ENCODE measurements at regions of chr5 and their contacts with region 1.

Region 1: GRCh38 chr5:108451269-108451668 is 69.4 kb upstream of the FBXL17 start:
- DNase-seq: no peak
- ATAC-seq: no peak
- H3K4me3 ChIP-seq: no peak overlapping the region
- H3K27ac ChIP-seq: no peak overlapping the region
- H3K4me1 ChIP-seq: no peaks in the 10 kb centered on the region
- H3K27me3 ChIP-seq: no peaks in the 10 kb centered on the region
- CTCF ChIP-seq: peak in 1 of 3 experiments; percentile 23; a peak in 2 of 6 replicates
- EP300 ChIP-seq: no peak
- POLR2A ChIP-seq: no peak
- RAD21 ChIP-seq: peak; percentile 58

Region 2: GRCh38 chr5:109479260-109479860 is 1028.1 kb after region 1 on chr5:
- CTCF ChIA-PET with region 1: no interaction called
- POLR2A ChIA-PET with region 1: no interaction called
- RAD21 ChIA-PET with region 1: no interaction called
- SMC1A ChIA-PET with region 1: no interaction called
- in situ Hi-C with region 1: no loop called
- intact Hi-C with region 1: loop called (anchors 10 kb)
- DNase-seq: no peak
- ATAC-seq: peak; percentile 60; the same call in 2 of the 3 replicates
- H3K4me3 ChIP-seq: no peak overlapping the region
- H3K27ac ChIP-seq: no peak overlapping the region
- H3K4me1 ChIP-seq: no peaks in the 10 kb centered on the region
- H3K27me3 ChIP-seq: 0 out of 4 replicates have a peak, but pooled peaks cover 0 to 4% of the 10 kb centered on the region in 2 experiments
- CTCF ChIP-seq: peak; percentile 29 to 54 (median 34); a peak in 3 of 6 replicates
- EP300 ChIP-seq: no peak
- POLR2A ChIP-seq: no peak
- RAD21 ChIP-seq: peak; percentile 52

Measured in GM12878 (cell line).